OCI-LY7 (cell line): ENCODE measurements at regions of chr21 and their contacts with region 1.

Region 1: GRCh38 chr21:29018540-29018939 is 609 bp downstream of the RWDD2B start:
- DNase-seq: no peak
- H3K4me3 ChIP-seq: peak overlapping the region; percentile 86
- H3K27ac ChIP-seq: peak overlapping the region; percentile 56
- H3K4me1 ChIP-seq: peaks cover 18% of the 10 kb centered on the region
- CTCF ChIP-seq: no peak

Region 2: GRCh38 chr21:28992526-28993292 is 25.8 kb before region 1 on chr21 and contains the start of gene LTN1:
- CTCF ChIA-PET with region 1: no interaction called
- POLR2A ChIA-PET with region 1: interaction called, 23 read pairs
- intact Hi-C with region 1: no loop called
- DNase-seq: peak; percentile 99
- H3K4me3 ChIP-seq: peak within 1 kb of the TSS; percentile 90
- H3K27ac ChIP-seq: peak within 1 kb of the TSS; percentile 83
- H3K4me1 ChIP-seq: peaks cover 27% of the 10 kb centered on the region
- CTCF ChIP-seq: no peak
- total RNA-seq, gene LTN1: 17.2 and 18.4 TPM in 2 replicates

Region 3: GRCh38 chr21:29002442-29003144 is 15.9 kb before region 1 on chr21:
- CTCF ChIA-PET with region 1: interaction called, 4 read pairs
- POLR2A ChIA-PET with region 1: interaction called, 71 read pairs
- intact Hi-C with region 1: loop called (anchors 1 kb)
- DNase-seq: peak; percentile 98
- H3K4me3 ChIP-seq: peak overlapping the region; percentile 76
- H3K27ac ChIP-seq: peak overlapping the region; percentile 77
- H3K4me1 ChIP-seq: peaks cover 5% of the 10 kb centered on the region
- CTCF ChIP-seq: no peak

Region 4: GRCh38 chr21:29007805-29008204 is 10.7 kb before region 1 on chr21:
- CTCF ChIA-PET with region 1: interaction called, 4 read pairs
- POLR2A ChIA-PET with region 1: interaction called, 71 read pairs
- intact Hi-C with region 1: no loop called
- DNase-seq: no peak
- H3K4me3 ChIP-seq: no peak overlapping the region
- H3K27ac ChIP-seq: no peak overlapping the region
- H3K4me1 ChIP-seq: peaks cover 5% of the 10 kb centered on the region
- CTCF ChIP-seq: no peak